GM12878 (cell line): ENCODE measurements at regions of chr5 and their contacts with region 1.

Region 1: DNA sequence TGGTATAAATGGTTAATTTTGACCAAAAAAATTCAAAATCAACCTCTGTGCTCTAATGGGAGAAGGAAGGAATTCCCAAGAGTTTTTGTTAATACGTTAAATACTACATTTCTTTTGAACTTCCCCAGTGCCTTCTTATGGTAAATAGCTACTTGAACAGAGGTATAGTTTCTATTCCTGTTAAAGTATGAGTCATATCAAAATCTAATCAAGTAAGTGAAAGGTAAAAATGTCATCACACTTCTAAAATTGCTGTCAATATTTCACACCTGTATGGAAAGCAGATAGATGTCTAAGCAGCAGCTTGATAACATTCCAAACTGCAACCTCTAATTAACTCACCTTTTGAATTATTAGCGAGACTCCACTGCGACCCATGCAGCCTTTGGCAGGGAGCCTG is 214.1 kb upstream of the MEF2C start:
- DNase-seq: peak; percentile 52
- ATAC-seq: peak; percentile 88
- H3K4me3 ChIP-seq: peak overlapping the region; percentile 26; the same call in 1 of the 2 replicates
- H3K27ac ChIP-seq: peak overlapping the region; percentile 52
- H3K4me1 ChIP-seq: peaks cover 12% of the 10 kb centered on the region
- H3K27me3 ChIP-seq: no peaks in the 10 kb centered on the region
- CTCF ChIP-seq: no peak
- EP300 ChIP-seq: peak; percentile 87 to 95
- POLR2A ChIP-seq: no peak
- RAD21 ChIP-seq: no peak

Region 2: DNA sequence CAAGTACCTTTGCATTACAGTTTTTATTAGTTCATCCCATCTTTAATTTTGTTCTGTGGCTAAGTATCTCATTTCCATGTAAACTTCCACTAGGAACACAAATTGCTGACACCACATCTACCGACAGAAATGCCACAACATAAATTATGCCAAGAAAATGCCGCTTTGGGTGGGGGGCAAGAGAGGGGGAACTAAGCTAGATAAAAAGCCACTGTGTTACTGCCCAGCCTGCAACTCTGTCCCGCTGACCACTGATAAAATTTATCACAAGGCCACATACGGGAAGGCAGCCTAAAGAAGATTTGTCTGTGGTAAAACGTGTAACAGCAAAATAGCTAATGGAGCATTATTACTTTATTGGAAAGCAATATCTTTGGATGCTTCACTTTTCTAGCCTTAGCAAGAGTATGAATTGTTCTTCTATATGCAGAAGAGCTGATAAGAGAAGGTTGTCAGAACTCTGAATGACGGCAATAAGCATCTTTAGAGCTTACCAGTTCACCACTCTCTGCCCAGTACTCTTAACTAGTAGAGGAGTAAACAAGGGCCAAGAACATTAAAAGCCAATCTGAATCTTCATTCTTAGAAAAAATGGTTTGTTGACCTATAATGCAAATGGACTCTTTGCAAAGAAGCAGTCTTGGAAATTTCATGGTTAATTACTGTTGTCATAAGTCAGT is 41.9 kb before region 1 on chr5:
- CTCF ChIA-PET with region 1: no interaction called
- POLR2A ChIA-PET with region 1: no interaction called
- RAD21 ChIA-PET with region 1: no interaction called
- SMC1A ChIA-PET with region 1: no interaction called
- in situ Hi-C with region 1: no loop called
- intact Hi-C with region 1: no loop called
- DNase-seq: no peak
- ATAC-seq: no peak
- H3K4me3 ChIP-seq: no peak overlapping the region
- H3K27ac ChIP-seq: no peak overlapping the region
- H3K4me1 ChIP-seq: no peaks in the 10 kb centered on the region
- H3K27me3 ChIP-seq: no peaks in the 10 kb centered on the region
- CTCF ChIP-seq: no peak
- EP300 ChIP-seq: no peak
- POLR2A ChIP-seq: no peak
- RAD21 ChIP-seq: no peak

Region 3: GRCh38 chr5:89065919-89066318 is 31.2 kb before region 1 on chr5:
- CTCF ChIA-PET with region 1: interaction called, 4 read pairs
- POLR2A ChIA-PET with region 1: interaction called, 8 read pairs
- RAD21 ChIA-PET with region 1: interaction called, 12 read pairs
- SMC1A ChIA-PET with region 1: interaction called, 56 read pairs
- in situ Hi-C with region 1: no loop called
- intact Hi-C with region 1: no loop called
- DNase-seq: peak; percentile 65
- ATAC-seq: peak; percentile 92
- H3K4me3 ChIP-seq: no peak overlapping the region
- H3K27ac ChIP-seq: peak overlapping the region; percentile 83
- H3K4me1 ChIP-seq: peaks cover 10% of the 10 kb centered on the region
- H3K27me3 ChIP-seq: no peaks in the 10 kb centered on the region
- CTCF ChIP-seq: no peak
- EP300 ChIP-seq: peak; percentile 56 to 68; a peak in 2 of 4 replicates
- POLR2A ChIP-seq: 0 out of 2 replicates have a peak, but pooled peaks have one; percentile 19
- RAD21 ChIP-seq: peak; percentile 27; the same call in 1 of the 2 replicates

Region 4: DNA sequence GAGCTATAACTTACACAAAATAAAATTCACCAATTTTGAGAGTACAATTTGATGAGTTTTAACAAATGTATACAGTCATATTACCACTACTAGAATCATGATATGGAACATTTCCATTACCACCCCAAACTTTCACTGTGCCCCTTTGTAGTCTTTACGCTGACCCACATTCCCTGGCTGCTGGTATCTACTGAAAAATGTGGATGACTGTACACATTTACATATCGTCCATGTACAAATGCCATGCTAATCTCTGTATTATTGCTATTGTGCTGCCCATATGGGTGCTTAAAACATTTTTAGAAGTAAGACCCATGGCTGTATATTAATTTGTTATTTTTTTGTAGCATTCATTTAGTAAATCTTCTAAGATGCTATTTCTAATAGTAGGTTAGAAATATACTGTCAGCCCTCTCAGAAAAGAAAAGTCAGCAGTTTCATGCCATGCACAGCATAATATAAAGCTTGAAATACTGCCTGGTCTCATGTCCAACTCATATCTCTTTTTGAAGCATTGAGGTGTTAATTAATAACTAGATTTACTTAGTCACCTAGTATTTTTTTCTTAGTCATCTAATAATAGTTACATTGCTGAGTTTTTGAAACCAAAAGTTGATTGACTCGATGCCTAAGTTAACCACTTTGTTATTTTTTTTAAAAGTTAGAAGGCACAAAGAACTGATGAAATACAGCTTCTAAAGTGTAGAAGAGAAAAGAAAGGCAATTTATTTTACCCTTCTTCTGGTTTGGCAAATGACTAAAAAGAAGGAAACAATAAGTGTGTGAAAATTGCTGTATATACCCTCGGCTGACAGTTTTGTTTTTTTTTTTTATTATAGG is 25.8 kb before region 1 on chr5:
- CTCF ChIA-PET with region 1: interaction called, 4 read pairs
- POLR2A ChIA-PET with region 1: interaction called, 8 read pairs
- RAD21 ChIA-PET with region 1: interaction called, 23 read pairs
- SMC1A ChIA-PET with region 1: interaction called, 56 read pairs
- in situ Hi-C with region 1: no loop called
- intact Hi-C with region 1: no loop called
- DNase-seq: peak; percentile 33
- ATAC-seq: peak; percentile 92
- H3K4me3 ChIP-seq: peak overlapping the region; percentile 58
- H3K27ac ChIP-seq: peak overlapping the region; percentile 92
- H3K4me1 ChIP-seq: peaks cover 14% of the 10 kb centered on the region
- H3K27me3 ChIP-seq: no peaks in the 10 kb centered on the region
- CTCF ChIP-seq: no peak
- EP300 ChIP-seq: peak; percentile 52 to 66; a peak in 2 of 4 replicates
- POLR2A ChIP-seq: no peak
- RAD21 ChIP-seq: 0 out of 2 replicates have a peak, but pooled peaks have one; percentile 2

Region 5: DNA sequence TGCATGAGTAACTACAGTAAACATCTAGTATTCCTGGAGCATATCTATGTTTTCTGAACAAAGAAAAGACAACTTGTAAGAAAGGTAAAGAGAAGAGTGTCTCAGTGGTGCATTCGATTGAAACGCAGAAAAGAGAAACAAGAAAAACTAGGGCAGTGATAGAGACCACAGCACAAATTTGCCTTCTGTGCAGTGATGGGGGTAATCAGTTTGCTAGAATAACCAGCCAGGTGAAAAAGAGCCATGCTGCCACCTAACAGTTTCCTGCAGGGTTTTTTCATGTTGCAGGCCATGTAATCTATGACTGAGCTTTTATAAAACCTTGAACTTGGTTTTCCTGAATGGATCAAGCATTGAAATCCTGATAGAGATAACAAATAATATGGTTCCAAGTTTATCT is 15.7 kb before region 1 on chr5:
- CTCF ChIA-PET with region 1: interaction called, 21 read pairs
- POLR2A ChIA-PET with region 1: interaction called, 5 read pairs
- RAD21 ChIA-PET with region 1: interaction called, 52 read pairs
- SMC1A ChIA-PET with region 1: interaction called, 69 read pairs
- in situ Hi-C with region 1: no loop called
- intact Hi-C with region 1: no loop called
- DNase-seq: peak; percentile 62
- ATAC-seq: peak; percentile 89
- H3K4me3 ChIP-seq: peak overlapping the region; percentile 3; the same call in 1 of the 2 replicates
- H3K27ac ChIP-seq: peak overlapping the region; percentile 55
- H3K4me1 ChIP-seq: peaks cover 11% of the 10 kb centered on the region
- H3K27me3 ChIP-seq: no peaks in the 10 kb centered on the region
- CTCF ChIP-seq: peak in 1 of 3 experiments; percentile 36; a peak in 2 of 6 replicates
- EP300 ChIP-seq: 0 out of 4 replicates have a peak, but pooled peaks of 1 of the 2 experiments have one; percentile 21
- POLR2A ChIP-seq: no peak
- RAD21 ChIP-seq: peak; percentile 54

Region 6: DNA sequence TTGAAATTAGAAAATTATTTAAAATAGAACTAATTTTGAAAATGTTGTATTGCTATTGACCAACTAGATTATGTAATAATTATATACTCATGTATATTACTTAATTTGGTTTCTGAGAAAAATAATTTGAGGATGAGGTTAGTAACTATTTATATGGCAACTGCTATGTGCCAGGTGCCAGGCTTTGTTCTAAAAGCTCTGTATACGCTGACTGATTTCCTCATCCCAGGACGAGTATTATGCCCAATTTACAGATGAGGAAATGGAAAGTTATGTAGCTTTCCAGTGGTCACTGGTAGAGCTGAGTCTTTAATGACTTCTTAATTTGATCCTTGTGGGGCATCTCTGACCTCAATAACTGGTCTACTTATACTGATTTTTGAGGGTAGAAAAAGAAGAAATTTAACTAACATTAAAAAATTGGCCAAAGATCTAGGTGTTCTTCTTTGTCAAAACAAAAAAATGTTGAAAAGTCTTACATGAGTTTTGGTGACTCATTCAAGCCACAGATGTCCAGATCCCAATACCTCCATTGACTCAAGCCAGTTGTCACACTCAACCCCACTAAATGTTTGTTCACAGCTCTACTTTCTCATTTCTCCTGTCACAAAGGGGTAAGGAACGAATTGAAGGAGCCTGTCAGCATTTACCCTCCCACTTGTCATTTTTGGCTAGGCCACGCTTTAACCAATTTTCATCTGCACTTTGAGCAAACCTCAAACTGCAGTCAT is 14.0 kb after region 1 on chr5:
- CTCF ChIA-PET with region 1: interaction called, 7 read pairs
- POLR2A ChIA-PET with region 1: no interaction called
- RAD21 ChIA-PET with region 1: interaction called, 14 read pairs
- SMC1A ChIA-PET with region 1: interaction called, 10 read pairs
- in situ Hi-C with region 1: no loop called
- intact Hi-C with region 1: no loop called
- DNase-seq: no peak
- ATAC-seq: peak; percentile 37
- H3K4me3 ChIP-seq: no peak overlapping the region
- H3K27ac ChIP-seq: no peak overlapping the region
- H3K4me1 ChIP-seq: no peaks in the 10 kb centered on the region
- H3K27me3 ChIP-seq: no peaks in the 10 kb centered on the region
- CTCF ChIP-seq: no peak
- EP300 ChIP-seq: no peak
- POLR2A ChIP-seq: no peak
- RAD21 ChIP-seq: no peak

Region 7: GRCh38 chr5:89117124-89117644 is 20.1 kb after region 1 on chr5:
- CTCF ChIA-PET with region 1: no interaction called
- POLR2A ChIA-PET with region 1: no interaction called
- RAD21 ChIA-PET with region 1: interaction called, 14 read pairs
- SMC1A ChIA-PET with region 1: interaction called, 4 read pairs
- in situ Hi-C with region 1: no loop called
- intact Hi-C with region 1: no loop called
- DNase-seq: peak; percentile 55
- ATAC-seq: peak; percentile 98
- H3K4me3 ChIP-seq: no peak overlapping the region
- H3K27ac ChIP-seq: no peak overlapping the region
- H3K4me1 ChIP-seq: no peaks in the 10 kb centered on the region; the same call in 1 of the 2 replicates
- H3K27me3 ChIP-seq: no peaks in the 10 kb centered on the region
- CTCF ChIP-seq: no peak
- EP300 ChIP-seq: peak; percentile 46 to 47; a peak in 1 of 4 replicates
- POLR2A ChIP-seq: no peak
- RAD21 ChIP-seq: no peak

Region 8: GRCh38 chr5:89520771-89521170 is 423.7 kb after region 1 on chr5:
- CTCF ChIA-PET with region 1: no interaction called
- POLR2A ChIA-PET with region 1: no interaction called
- RAD21 ChIA-PET with region 1: no interaction called
- SMC1A ChIA-PET with region 1: no interaction called
- in situ Hi-C with region 1: no loop called
- intact Hi-C with region 1: no loop called
- DNase-seq: no peak
- ATAC-seq: no peak
- H3K4me3 ChIP-seq: no peak overlapping the region
- H3K27ac ChIP-seq: no peak overlapping the region
- H3K4me1 ChIP-seq: no peaks in the 10 kb centered on the region
- H3K27me3 ChIP-seq: no peaks in the 10 kb centered on the region
- CTCF ChIP-seq: no peak
- EP300 ChIP-seq: no peak
- POLR2A ChIP-seq: no peak
- RAD21 ChIP-seq: no peak